ENCODE measurements at regions of chr3 and their contacts with region 1.

Region 1: DNA sequence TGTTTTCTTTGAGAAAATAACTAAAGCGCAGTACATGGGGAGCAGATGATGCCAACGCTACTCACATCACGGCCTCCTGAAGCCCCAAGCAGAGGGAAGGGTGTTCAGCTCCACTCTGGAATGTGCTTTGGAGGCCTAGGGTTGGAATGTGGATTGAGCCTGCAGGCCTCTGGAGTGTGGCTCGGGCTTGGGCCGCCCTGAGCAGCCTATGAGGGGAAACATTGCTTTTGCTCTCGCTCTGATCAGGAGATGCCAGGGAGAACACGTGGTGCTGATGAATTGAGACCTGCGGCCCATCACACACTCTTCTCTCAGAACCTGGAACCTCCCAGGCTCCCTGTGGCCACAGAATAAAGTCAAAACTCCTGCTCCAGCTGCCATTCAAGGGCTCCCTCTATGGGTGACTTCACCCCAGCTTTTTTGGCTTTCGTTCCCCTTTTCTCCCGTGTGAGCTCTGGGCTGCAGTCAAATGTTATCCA is 23.3 kb downstream of the CCDC13 start:
- DNase-seq: peak; percentile 75

Region 2: DNA sequence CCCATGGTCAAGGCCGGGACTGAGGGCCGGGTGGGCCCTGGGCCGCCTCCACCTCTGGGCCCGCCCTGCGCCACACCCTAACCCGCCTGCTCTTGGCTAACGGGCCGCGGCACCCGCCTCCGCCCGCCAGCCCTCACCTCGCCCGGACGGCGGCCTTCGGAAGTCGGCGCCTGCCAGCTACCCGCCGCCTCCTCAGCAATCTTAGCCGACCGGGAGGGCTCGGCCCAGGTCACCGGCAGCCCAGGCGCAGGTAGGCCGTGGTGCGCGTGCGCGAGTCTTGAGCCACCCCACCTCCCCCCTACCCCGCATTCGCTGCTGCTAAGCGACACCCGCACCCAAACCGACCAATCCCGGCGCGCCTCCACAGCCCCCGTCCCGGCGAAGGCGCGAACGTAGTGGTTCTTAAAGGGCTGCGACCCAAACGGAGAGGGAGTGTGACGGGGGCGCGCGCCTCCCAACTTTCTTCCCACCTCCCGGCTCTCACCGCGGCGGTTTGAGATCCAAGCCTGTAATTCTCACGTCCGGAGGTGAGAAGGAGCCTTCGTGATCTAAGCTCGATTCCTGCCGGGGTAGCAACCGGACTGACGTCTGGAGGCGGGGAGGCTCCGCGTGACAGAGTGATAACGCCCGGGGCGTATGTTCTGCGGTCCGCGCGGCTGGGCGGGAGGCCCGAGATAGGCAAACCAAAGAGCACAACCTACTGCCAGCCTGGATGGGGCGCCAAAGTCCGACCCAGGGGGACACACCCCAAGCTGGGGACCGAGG is 167.9 kb before region 1 on chr3 and contains the start of gene SEC22C:
- intact Hi-C with region 1: loop called (anchors 5 kb)
- DNase-seq: peak; percentile 98
- total RNA-seq, gene SEC22C: 31.5 TPM

Region 3: DNA sequence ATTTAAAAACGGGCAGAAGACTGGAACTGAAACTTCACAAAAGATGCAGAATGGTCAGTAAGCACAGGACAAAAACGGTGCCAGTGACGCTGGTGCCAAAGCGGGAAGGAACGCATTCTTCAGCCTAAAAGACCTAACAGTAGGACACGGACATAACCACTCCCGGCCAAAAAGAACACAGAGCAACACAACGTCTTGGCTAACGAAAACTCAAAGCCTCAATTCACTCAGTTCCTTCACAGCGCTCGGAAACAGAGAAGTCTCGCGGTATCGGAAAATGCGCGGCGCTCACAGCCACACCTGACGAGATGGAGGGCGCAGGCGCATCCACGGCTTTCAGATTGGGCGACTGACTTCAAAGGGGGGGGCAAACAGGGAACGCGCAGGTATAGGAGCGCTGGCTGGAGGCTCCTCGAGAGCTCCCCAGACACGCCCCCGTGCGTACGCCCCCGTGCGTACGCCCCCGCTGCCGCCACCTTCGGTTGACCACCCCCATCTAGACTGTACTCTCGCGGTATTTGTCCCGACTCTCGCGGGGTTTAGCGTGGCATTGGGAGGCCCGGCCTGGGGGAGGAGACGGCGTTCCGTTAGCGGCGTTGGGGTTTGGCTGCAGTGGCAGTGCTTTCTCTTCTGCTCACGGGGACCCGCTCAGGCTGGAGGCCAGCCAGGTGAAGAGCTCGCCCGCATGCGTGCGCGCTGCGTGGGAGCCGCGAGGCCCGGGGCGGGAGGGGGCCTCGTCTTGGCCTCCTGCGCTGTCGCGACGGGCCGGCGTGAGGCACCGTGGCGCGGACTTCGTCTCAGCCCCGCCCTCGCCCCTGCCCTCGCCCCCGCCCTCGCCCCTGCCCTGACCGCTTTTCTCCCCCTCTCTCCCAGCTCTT is 149.4 kb before region 1 on chr3 and contains the start of gene NKTR:
- intact Hi-C with region 1: loop called (anchors 5 kb)
- DNase-seq: peak; percentile 98
- total RNA-seq, gene NKTR: 35.1 TPM

Region 4: DNA sequence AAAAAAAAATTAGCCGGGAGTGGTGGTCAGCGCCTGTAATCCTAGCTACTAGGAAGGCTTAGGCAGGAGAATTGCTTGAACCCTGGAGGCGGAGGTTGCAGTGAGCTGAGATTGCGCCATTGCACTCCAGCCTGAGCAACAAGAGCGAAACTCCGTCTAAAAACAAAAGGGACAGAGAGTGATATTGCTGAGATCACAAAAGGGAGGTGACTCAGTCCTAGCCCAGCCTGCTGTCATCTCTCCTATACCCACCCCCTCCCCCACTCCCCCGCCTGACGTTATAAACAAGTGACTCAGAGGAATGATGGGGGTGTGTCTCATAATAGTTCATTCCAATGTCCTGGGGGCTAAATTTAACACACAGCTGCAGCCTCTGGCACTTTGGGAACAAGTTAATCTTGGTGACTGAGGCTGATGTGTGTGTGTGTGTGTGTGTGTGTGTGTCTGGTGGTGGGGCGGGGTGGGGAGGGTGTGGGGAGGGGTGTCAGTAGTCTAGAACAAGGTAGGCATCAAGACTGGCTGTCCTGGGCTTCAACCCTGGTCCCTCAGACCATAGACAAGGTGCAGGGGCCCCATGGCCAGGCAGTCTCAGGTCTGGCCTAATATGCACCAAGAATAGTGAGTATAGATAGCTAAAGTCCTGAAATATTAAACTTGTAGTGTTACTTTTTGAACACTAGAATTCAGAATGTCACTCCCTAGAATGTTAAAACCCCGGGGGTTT is 65.8 kb before region 1 on chr3:
- intact Hi-C with region 1: no loop called
- DNase-seq: peak; percentile 81

Region 5: GRCh38 chr3:42763021-42763420 is 13.2 kb after region 1 on chr3:
- intact Hi-C with region 1: no loop called
- DNase-seq: no peak